Keratinocyte (primary cell): ENCODE measurements at regions of chr2 and their contacts with region 1.

Region 1: DNA sequence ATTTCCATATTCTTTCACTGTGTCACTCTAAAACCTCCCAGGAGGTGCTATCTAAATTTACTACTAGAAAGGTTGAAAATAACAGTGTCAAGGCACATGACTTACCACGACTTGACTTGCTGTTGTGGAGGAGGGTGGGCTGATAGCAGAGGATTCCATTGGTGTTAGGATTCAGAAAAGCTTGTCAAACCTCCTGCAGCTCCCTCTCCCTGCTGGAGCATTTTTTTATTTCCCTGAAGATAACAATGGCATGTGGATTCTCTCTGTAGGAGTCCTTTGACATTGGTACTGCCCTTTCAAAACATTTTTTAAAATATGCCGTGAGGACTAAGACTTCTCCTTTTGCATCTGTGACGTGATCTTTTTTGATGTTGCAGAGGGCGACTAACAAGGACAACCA is 696.9 kb upstream of the GYPC start:
- DNase-seq: no peak
- H3K4me3 ChIP-seq: no peak overlapping the region
- H3K27ac ChIP-seq: no peak overlapping the region
- H3K4me1 ChIP-seq: no peaks in the 10 kb centered on the region
- H3K27me3 ChIP-seq: no peaks in the 10 kb centered on the region
- CTCF ChIP-seq: no peak

Region 2: GRCh38 chr2:125901278-125901677 is 57.8 kb before region 1 on chr2:
- dilution Hi-C with region 1: loop called (anchors 5 kb)
- DNase-seq: no peak
- H3K4me3 ChIP-seq: no peak overlapping the region
- H3K27ac ChIP-seq: no peak overlapping the region
- H3K4me1 ChIP-seq: no peaks in the 10 kb centered on the region
- H3K27me3 ChIP-seq: no peaks in the 10 kb centered on the region
- CTCF ChIP-seq: no peak